ENCODE measurements at regions of chr16 and their contacts with region 1.

Region 1: DNA sequence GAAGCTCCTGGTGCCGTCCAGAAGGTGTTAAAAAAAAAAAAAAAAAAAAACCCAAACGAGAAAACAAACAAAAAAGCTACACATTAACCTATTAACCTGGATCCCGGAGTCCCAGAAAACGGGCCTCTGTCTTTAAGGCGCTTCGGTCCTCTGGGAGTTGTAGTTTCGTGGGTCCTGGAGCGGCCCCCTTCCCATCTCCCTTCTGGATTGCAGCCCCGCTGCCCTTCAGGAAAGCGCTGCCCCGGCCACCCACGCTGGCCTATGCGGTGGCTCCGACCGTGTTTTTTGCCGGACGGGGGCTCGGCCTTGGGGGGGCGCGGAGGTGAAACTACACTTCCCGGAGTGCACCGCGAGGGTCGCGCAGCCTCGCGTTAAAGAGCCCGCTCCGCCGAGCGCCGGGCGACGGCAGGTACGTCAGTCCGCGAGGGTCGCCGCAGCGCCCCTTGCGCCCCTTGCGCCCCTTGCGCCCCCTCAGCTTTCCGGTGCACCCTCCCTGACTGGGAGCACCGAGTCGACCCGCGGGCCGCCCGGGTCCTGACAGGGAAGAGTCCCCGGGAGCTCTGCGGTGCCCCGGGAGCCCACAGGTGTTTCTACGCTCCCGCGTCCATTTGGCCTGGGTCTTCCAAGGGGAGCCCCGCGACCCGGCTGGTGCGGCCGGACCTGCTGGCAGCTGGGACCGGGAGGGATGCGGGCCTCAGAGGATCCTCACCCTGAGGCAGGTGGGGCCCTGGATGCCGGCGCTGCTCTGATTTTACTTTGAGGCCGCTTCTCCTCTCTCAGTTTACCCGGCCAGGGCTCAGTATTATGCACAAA is at the start of gene FCSK:
- DNase-seq: peak; percentile 66
- H3K4me3 ChIP-seq: peak within 1 kb of the TSS; percentile 90 to 98 (median 93)
- H3K27ac ChIP-seq: peak within 1 kb of the TSS; percentile 90 to 94 (median 92)
- H3K4me1 ChIP-seq: peaks cover 0 to 21% (median 9%) of the 10 kb centered on the region in 4 donors
- H3K27me3 ChIP-seq: no peaks in the 10 kb centered on the region
- CTCF ChIP-seq: peak in 2 of 5 experiments; percentile 4 to 16
- EP300 ChIP-seq: no peak
- POLR2A ChIP-seq: peak; percentile 34
- total RNA-seq, gene FCSK: 38.5 to 62.7 (median 43.1) TPM

Region 2: GRCh38 chr16:69741919-69742904 is 712.2 kb before region 1 on chr16:
- in situ Hi-C with region 1: no loop called
- intact Hi-C with region 1: no loop called
- DNase-seq: peak; percentile 92
- H3K4me3 ChIP-seq: peak overlapping the region in 1 of 4 donors; percentile 27
- H3K27ac ChIP-seq: peak overlapping the region; percentile 20 to 77 (median 70)
- H3K4me1 ChIP-seq: peaks cover 3 to 14% (median 13%) of the 10 kb centered on the region in 4 donors
- H3K27me3 ChIP-seq: no peaks in the 10 kb centered on the region
- CTCF ChIP-seq: peak in 2 of 5 experiments; percentile 12 to 32
- EP300 ChIP-seq: no peak
- POLR2A ChIP-seq: no peak

Region 3: DNA sequence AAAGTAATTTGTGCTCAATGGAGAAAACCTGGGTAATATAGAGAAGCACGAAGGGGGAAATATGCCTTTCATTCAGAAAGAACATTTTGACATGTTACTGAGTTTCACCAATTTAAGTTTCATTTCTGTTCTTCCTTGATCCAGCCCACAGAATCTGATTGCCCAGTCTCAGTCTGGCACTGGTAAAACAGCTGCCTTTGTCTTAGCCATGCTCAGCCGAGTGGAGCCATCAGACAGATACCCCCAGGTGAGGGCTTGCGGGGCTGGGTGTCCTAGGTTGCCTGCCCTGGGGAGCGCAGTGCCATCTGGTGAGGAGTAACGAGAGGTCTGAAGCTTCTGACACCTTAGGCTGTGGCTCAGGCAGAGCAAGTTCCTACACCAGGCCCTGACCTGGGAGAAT is 90.0 kb before region 1 on chr16:
- in situ Hi-C with region 1: loop called in 1 of 4 experiments (anchors 25 kb)
- intact Hi-C with region 1: no loop called
- DNase-seq: no peak
- H3K4me3 ChIP-seq: no peak overlapping the region
- H3K27ac ChIP-seq: no peak overlapping the region
- H3K4me1 ChIP-seq: no peaks in the 10 kb centered on the region
- H3K27me3 ChIP-seq: no peaks in the 10 kb centered on the region
- CTCF ChIP-seq: no peak
- EP300 ChIP-seq: no peak
- POLR2A ChIP-seq: no peak

Region 4: GRCh38 chr16:70380861-70381603 is 73.4 kb before region 1 on chr16:
- in situ Hi-C with region 1: no loop called
- intact Hi-C with region 1: loop called (anchors 5 kb)
- DNase-seq: peak; percentile 98
- H3K4me3 ChIP-seq: peak overlapping the region; percentile 55 to 74 (median 67)
- H3K27ac ChIP-seq: peak overlapping the region; percentile 88 to 96 (median 90)
- H3K4me1 ChIP-seq: peaks cover 7 to 18% (median 16%) of the 10 kb centered on the region in 4 donors
- H3K27me3 ChIP-seq: no peaks in the 10 kb centered on the region
- CTCF ChIP-seq: peak in 4 of 5 experiments; percentile 17 to 48 (median 26)
- EP300 ChIP-seq: no peak
- POLR2A ChIP-seq: peak; percentile 87

Region 5: GRCh38 chr16:70402916-70403659 is 51.3 kb before region 1 on chr16:
- in situ Hi-C with region 1: loop called in 2 of 4 experiments (anchors 10 kb)
- intact Hi-C with region 1: no loop called
- DNase-seq: no peak
- H3K4me3 ChIP-seq: no peak overlapping the region
- H3K27ac ChIP-seq: no peak overlapping the region
- H3K4me1 ChIP-seq: peaks cover 0 to 8% (median 5%) of the 10 kb centered on the region in 4 donors
- H3K27me3 ChIP-seq: no peaks in the 10 kb centered on the region
- CTCF ChIP-seq: no peak
- EP300 ChIP-seq: no peak
- POLR2A ChIP-seq: no peak

Measured in transverse colon (tissue), 4 donors.